ENCODE measurements at regions of chr11 and their contacts with region 1.

Region 1: DNA sequence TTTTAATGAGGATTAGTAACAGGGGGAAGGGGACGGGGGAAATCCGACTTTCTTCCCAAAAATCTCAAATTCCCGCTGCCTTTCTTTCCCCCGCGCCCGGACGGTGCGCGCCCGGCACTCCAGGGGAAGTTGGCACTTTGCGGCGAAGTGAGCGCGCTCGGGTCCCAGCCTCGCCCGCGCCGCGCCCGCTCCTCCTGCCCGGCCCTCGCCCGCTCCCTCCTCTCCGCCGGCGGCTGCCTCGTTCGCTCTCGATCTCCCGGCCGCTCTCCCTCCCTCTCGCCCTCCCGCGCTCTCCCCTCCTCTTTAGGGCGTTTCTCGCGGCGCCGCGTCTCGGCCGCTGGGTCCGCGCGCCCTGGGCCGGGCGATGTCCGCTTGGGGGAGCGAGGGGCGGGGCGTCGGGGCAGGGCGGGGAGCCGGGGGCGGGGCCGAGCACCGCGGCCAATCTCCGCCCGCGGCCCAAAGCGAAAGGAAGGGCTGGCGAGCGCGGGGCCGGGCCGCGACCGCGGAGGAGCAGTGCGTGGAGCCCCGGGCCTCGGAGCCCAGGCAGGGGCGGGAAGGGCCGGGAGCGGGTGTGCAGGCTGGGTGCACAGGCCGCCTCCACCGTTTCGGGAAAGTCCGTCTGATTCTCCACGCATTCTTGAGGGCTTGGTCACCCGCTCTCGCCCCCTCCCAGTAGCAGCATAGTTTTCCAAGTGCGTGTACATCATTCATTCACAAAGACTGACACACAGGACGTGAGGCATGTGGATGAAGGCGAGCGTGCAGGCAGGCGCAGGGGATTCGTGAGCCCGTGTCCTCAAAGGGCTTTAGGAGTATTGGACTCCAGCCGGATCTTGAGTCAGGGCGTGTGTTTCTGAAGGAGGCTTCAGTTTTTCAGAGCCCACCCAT is 65.1 kb downstream of the ETS1 start:
- DNase-seq: peak; percentile 81 to 90 (median 87)
- H3K4me3 ChIP-seq: peak overlapping the region; percentile 50 to 92
- H3K4me3 Mint-ChIP-seq: peak overlapping the region; percentile 92 to 100 (median 97)
- H3K27ac ChIP-seq: peak overlapping the region; percentile 89
- H3K27ac Mint-ChIP-seq: peak overlapping the region; percentile 96 to 99 (median 98)
- H3K4me1 ChIP-seq: peaks cover 45% of the 10 kb centered on the region
- H3K4me1 Mint-ChIP-seq: peaks cover 33 to 59% (median 44%) of the 10 kb centered on the region in 4 donors
- H3K27me3 ChIP-seq: no peaks in the 10 kb centered on the region
- H3K27me3 Mint-ChIP-seq: no peaks in the 10 kb centered on the region

Region 2: GRCh38 chr11:128323381-128323780 is 198.9 kb before region 1 on chr11:
- CTCF ChIA-PET with region 1: interaction called, 44 read pairs
- POLR2A ChIA-PET with region 1: interaction called, 490 read pairs
- intact Hi-C with region 1: loop called (anchors 1 kb)
- DNase-seq: peak; percentile 60 to 70 (median 68)
- H3K4me3 ChIP-seq: peak overlapping the region in 1 of 2 donors; percentile 17
- H3K4me3 Mint-ChIP-seq: peak overlapping the region in 7 of 8 donors; percentile 28 to 78 (median 63)
- H3K27ac ChIP-seq: peak overlapping the region; percentile 92
- H3K27ac Mint-ChIP-seq: peak overlapping the region; percentile 87 to 99 (median 97)
- H3K4me1 ChIP-seq: peaks cover 83% of the 10 kb centered on the region
- H3K4me1 Mint-ChIP-seq: peaks cover 65 to 92% (median 79%) of the 10 kb centered on the region in 4 donors
- H3K27me3 ChIP-seq: no peaks in the 10 kb centered on the region
- H3K27me3 Mint-ChIP-seq: no peaks in the 10 kb centered on the region

Region 3: GRCh38 chr11:128482512-128483191 is 39.6 kb before region 1 on chr11:
- CTCF ChIA-PET with region 1: interaction called, 43 read pairs
- POLR2A ChIA-PET with region 1: interaction called, 1,488 read pairs
- intact Hi-C with region 1: loop called (anchors 2 kb)
- DNase-seq: peak; percentile 68 to 88 (median 72)
- H3K4me3 ChIP-seq: peak overlapping the region; percentile 27 to 47
- H3K4me3 Mint-ChIP-seq: peak overlapping the region; percentile 73 to 92 (median 81)
- H3K27ac ChIP-seq: peak overlapping the region; percentile 94
- H3K27ac Mint-ChIP-seq: peak overlapping the region; percentile 88 to 99 (median 99)
- H3K4me1 ChIP-seq: peaks cover 99% of the 10 kb centered on the region
- H3K4me1 Mint-ChIP-seq: peaks cover 86 to 98% (median 93%) of the 10 kb centered on the region in 4 donors
- H3K27me3 ChIP-seq: no peaks in the 10 kb centered on the region
- H3K27me3 Mint-ChIP-seq: no peaks in the 10 kb centered on the region

Region 4: GRCh38 chr11:128544471-128545051 is 22.3 kb after region 1 on chr11:
- CTCF ChIA-PET with region 1: interaction called, 5 read pairs
- POLR2A ChIA-PET with region 1: interaction called, 56 read pairs
- intact Hi-C with region 1: loop called (anchors 1 kb)
- DNase-seq: peak in 1 of 5 donors; percentile 17
- H3K4me3 ChIP-seq: no peak overlapping the region
- H3K4me3 Mint-ChIP-seq: peak overlapping the region; percentile 4 to 72 (median 60)
- H3K27ac ChIP-seq: no peak overlapping the region
- H3K27ac Mint-ChIP-seq: peak overlapping the region in 4 of 7 donors; percentile 24 to 89 (median 56)
- H3K4me1 ChIP-seq: peaks cover 31% of the 10 kb centered on the region
- H3K4me1 Mint-ChIP-seq: peaks cover 25 to 53% (median 40%) of the 10 kb centered on the region in 4 donors
- H3K27me3 ChIP-seq: no peaks in the 10 kb centered on the region
- H3K27me3 Mint-ChIP-seq: peaks cover 0 to 1% of the 10 kb centered on the region in 2 donors

Region 5: GRCh38 chr11:128695539-128696221 is 173.4 kb after region 1 on chr11:
- CTCF ChIA-PET with region 1: no interaction called
- POLR2A ChIA-PET with region 1: interaction called, 11 read pairs
- intact Hi-C with region 1: no loop called
- DNase-seq: peak; percentile 51 to 73 (median 64)
- H3K4me3 ChIP-seq: peak overlapping the region; percentile 77 to 79
- H3K4me3 Mint-ChIP-seq: peak overlapping the region; percentile 94 to 99 (median 96)
- H3K27ac ChIP-seq: peak overlapping the region; percentile 77
- H3K27ac Mint-ChIP-seq: peak overlapping the region; percentile 95 to 99 (median 96)
- H3K4me1 ChIP-seq: peaks cover 59% of the 10 kb centered on the region
- H3K4me1 Mint-ChIP-seq: peaks cover 44 to 84% (median 56%) of the 10 kb centered on the region in 4 donors
- H3K27me3 ChIP-seq: no peaks in the 10 kb centered on the region
- H3K27me3 Mint-ChIP-seq: peaks cover 0 to 6% of the 10 kb centered on the region in 2 donors